ENCODE measurements at regions of chr11 and their contacts with region 1.

Region 1: DNA sequence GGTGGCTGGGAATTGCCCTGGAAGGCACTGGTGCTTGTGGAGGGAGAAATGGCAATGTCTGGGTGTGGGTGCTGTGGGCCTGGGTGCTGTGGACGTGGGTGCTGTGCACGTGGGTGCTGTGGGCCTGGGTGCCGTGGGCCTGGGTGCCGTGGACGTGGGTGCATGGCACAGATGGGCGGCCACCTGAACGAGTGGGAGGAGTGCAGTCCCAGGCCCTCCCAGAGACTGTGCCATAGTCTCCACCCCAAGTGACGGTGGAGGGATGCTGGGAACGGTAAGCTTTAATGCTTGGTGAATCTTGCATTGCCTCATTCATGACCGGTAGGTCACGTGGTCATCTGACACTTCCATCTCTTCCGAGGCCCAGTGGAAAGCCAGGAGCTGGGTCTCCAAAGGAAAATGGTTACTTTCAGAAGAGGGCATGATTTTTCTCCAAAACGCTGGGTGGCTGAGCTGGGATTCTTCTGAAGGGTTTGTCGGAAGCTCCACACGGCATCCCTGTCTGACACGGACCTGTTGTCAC is 28.8 kb upstream of the BRSK2 start:
- DNase-seq: no peak
- H3K4me3 ChIP-seq: no peak overlapping the region
- H3K27ac ChIP-seq: no peak overlapping the region
- H3K4me1 ChIP-seq: no peaks in the 10 kb centered on the region
- H3K27me3 ChIP-seq: no peaks in the 10 kb centered on the region
- CTCF ChIP-seq: no peak

Region 2: DNA sequence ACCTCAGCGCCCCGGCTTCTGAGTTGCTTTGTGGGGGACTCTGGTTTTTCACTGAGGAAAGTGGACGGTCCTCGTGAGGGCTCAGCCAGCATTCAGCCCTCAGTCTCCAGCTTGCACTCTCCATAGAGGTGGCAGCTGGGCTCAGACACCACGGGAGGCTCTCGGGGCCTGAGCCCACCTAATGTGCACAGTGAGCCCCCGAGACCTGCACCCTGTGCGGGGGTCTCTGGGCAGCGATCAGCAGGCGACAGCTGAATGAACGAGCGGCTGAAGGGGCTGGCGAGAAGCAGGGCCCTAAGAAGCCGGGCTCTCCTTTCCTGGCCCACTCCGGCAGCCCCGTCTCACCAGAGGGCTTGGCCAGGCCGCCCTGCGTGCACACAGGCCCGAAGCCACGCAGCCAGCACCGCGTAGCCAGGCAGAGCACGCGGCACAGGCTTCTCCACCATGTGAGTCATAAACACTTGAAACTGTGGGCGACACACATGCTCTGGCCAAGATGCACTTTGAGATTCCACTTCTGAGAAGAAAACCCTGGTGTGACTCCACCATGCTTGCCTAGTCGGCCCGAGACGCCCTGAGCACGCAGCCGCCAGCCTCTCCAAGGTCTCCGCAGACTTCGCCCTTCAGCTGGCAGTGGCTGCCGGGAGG is 79.4 kb before region 1 on chr11:
- CTCF ChIA-PET with region 1: no interaction called
- dilution Hi-C with region 1: loop called (anchors 5 kb)
- in situ Hi-C with region 1: no loop called
- intact Hi-C with region 1: no loop called
- DNase-seq: no peak
- H3K4me3 ChIP-seq: no peak overlapping the region
- H3K27ac ChIP-seq: no peak overlapping the region
- H3K4me1 ChIP-seq: no peaks in the 10 kb centered on the region
- H3K27me3 ChIP-seq: no peaks in the 10 kb centered on the region
- CTCF ChIP-seq: no peak

Region 3: GRCh38 chr11:1401656-1402221 is 40.8 kb after region 1 on chr11:
- CTCF ChIA-PET with region 1: no interaction called
- dilution Hi-C with region 1: loop called (anchors 5 kb)
- in situ Hi-C with region 1: no loop called
- intact Hi-C with region 1: no loop called
- DNase-seq: peak; percentile 34
- H3K4me3 ChIP-seq: no peak overlapping the region
- H3K27ac ChIP-seq: no peak overlapping the region
- H3K4me1 ChIP-seq: no peaks in the 10 kb centered on the region
- H3K27me3 ChIP-seq: no peaks in the 10 kb centered on the region
- CTCF ChIP-seq: no peak

Region 4: GRCh38 chr11:1478544-1478943 is 117.6 kb after region 1 on chr11:
- CTCF ChIA-PET with region 1: no interaction called
- dilution Hi-C with region 1: loop called (anchors 5 kb)
- in situ Hi-C with region 1: no loop called
- intact Hi-C with region 1: no loop called
- DNase-seq: no peak
- H3K4me3 ChIP-seq: no peak overlapping the region
- H3K27ac ChIP-seq: no peak overlapping the region
- H3K4me1 ChIP-seq: no peaks in the 10 kb centered on the region
- H3K27me3 ChIP-seq: no peaks in the 10 kb centered on the region
- CTCF ChIP-seq: no peak

Measured in mammary epithelial cell (primary cell).